ENCODE measurements at regions of chr1 and their contacts with region 1.

Region 1: GRCh38 chr1:112369392-112370285 is 26.4 kb upstream of the CTTNBP2NL start:
- DNase-seq: no peak
- H3K4me3 ChIP-seq: no peak overlapping the region
- CTCF ChIP-seq: peak; percentile 99

Region 2: GRCh38 chr1:112267929-112268328 is 101.7 kb before region 1 on chr1:
- CTCF ChIA-PET with region 1: no interaction called
- POLR2A ChIA-PET with region 1: no interaction called
- DNase-seq: no peak
- H3K4me3 ChIP-seq: no peak overlapping the region
- CTCF ChIP-seq: no peak

Region 3: DNA sequence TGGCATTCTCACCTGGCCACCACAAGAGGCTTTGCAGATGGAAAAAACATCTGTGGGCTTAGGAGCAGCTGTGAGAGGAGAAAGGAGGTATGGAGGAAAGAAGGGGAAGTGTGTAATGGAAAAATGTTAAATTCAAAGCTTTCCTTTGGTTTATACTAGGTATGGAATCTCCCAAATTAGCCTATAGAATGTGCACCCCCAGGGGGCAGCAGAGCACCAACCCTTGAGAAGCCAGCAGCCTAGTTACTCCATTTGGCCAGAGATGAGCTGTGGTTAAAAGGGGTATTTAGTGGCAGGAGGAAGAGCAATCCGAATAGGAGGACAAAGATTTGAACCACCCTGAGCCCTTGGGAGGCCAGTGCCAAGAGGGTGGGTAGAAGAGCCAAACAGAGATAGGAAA is 71.1 kb before region 1 on chr1:
- CTCF ChIA-PET with region 1: interaction called, 43 read pairs
- POLR2A ChIA-PET with region 1: no interaction called
- DNase-seq: peak; percentile 4
- H3K4me3 ChIP-seq: no peak overlapping the region
- CTCF ChIP-seq: peak; percentile 59

Region 4: DNA sequence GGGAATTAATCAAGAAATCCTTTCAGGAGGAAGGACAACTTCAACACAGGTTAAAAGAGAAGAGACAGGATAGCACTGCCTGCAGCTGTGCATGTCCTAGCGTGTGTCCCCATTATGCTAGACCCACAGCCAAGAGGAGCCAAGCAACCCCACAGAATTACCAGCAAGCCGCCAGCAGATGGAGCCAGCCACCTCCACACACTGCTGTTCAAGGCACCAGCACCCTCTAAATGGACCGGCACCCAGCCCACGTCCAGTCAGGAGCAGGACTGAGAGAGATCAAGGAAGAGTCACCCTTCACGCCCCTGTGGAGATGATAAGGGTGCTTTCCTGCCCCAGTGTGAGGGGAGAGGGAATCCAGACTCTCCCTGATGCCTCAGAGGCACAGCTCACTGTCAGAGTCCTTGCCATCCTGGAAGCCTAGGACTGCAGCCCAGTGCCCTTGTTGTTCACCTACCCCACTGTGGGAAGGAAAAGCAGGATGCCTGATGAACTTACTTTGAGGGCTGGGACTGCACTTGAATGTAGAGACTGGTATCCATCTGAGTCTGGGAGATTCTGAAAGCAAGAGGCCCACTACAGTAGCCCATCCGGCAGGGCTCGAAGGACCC is 10.7 kb before region 1 on chr1:
- CTCF ChIA-PET with region 1: interaction called, 236 read pairs
- POLR2A ChIA-PET with region 1: no interaction called
- DNase-seq: no peak
- H3K4me3 ChIP-seq: no peak overlapping the region
- CTCF ChIP-seq: peak; percentile 91

Region 5: GRCh38 chr1:112383759-112384356 is 14.2 kb after region 1 on chr1:
- CTCF ChIA-PET with region 1: interaction called, 99 read pairs
- POLR2A ChIA-PET with region 1: interaction called, 3 read pairs
- DNase-seq: no peak
- H3K4me3 ChIP-seq: no peak overlapping the region
- CTCF ChIP-seq: no peak

Region 6: DNA sequence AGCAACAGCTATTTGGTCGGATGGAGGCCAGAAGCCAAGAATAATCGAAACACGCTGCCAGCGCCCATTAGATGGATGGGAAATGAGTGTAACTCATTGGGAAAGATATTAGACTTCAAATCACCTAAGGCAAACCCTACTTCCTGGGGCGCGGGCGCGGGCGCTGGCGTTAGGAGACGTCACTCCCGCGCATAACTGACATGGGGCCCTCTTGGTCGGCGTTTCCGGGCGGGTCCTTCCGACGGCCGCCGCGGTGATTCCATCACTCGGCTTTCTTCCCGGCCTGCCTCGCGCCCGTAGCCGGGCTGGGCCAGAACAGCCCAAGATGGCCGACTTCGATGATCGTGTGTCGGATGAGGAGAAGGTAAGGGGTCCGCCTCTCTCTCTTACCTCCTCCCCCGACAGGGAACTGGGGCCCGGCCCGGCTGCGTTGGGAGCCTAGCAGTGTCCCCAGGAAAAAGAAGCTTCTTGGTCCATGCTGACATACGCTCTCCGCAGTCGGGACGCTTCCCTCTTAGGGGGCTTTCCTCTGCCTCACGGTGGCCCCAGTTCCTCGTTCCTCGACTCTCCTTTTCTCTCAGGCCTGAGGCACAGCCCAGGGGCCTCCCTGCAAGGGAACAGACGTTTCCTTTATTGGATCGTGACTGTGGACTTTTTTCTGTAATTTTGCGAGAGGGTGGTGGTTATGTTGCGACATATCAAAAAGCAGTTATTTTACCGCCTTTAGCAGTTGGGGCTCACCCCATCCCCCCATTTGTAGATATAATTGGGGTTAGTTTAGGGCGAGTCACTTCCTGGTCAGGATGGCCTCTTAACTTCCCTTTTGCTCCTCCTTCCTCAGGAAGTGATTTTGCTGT is 250.1 kb after region 1 on chr1 and contains the start of gene CAPZA1:
- CTCF ChIA-PET with region 1: interaction called, 16 read pairs
- POLR2A ChIA-PET with region 1: no interaction called
- DNase-seq: peak; percentile 59
- H3K4me3 ChIP-seq: peak within 1 kb of the TSS; percentile 100
- CTCF ChIP-seq: no peak

Measured in AG04449 (cell line).